CD8-positive, alpha-beta T cell (primary cell): ENCODE measurements at regions of chr10 and their contacts with region 1.

Region 1: DNA sequence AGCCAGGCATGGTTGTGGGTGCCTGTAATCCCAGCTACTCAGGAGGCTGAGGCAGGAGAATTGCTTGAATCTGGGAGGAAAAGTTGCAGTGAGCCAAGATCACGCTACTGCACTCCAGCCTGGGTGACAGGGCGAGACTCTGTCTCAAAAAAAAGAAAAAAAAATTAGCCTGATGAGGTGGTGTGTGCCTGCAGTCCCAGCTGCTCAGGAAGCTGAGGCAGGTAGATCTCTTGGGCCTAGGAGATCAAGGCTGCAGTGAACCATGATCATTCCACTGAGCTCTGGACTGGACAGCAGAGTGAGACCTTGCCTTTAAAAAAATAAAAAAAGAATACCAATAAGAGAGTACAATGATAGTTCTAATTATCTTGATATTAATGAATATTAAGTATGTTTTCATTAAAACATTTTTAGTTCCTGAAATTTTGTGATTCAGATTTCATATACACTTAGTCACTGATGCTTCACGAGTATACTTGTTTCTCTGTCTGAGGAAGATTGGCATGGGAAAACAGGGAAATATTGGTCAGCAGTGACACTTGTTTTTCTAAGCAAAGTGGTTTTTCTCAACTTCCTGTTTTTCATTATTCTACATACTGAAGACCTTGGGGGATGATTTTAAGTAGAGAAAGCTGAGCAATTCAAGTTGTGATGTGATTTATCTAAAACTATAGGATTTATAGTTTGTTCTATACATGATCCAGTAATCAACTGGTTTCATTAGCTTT is 76.8 kb downstream of the ADK start:
- DNase-seq: peak in 4 of 9 experiments; percentile 22 to 58 (median 43)
- ATAC-seq: peak; percentile 78
- H3K4me3 ChIP-seq: no peak overlapping the region
- H3K4me3 Mint-ChIP-seq: peak overlapping the region; percentile 55
- H3K27ac ChIP-seq: peak overlapping the region; percentile 38 to 69
- H3K27ac Mint-ChIP-seq: peak overlapping the region; percentile 94
- H3K4me1 ChIP-seq: peaks cover 17% of the 10 kb centered on the region
- H3K4me1 Mint-ChIP-seq: peaks cover 37% of the 10 kb centered on the region
- H3K27me3 ChIP-seq: no peaks in the 10 kb centered on the region
- H3K27me3 Mint-ChIP-seq: no peaks in the 10 kb centered on the region
- CTCF ChIP-seq: no peak

Region 2: GRCh38 chr10:74189999-74190421 is 37.9 kb before region 1 on chr10:
- CTCF ChIA-PET with region 1: no interaction called
- POLR2A ChIA-PET with region 1: no interaction called
- intact Hi-C with region 1: loop called in 1 of 2 experiments (anchors 5 kb)
- DNase-seq: peak in 5 of 9 experiments; percentile 24 to 65 (median 42)
- ATAC-seq: peak; percentile 48
- H3K4me3 ChIP-seq: peak overlapping the region in 1 of 2 experiments; percentile 4
- H3K4me3 Mint-ChIP-seq: peak overlapping the region; percentile 49
- H3K27ac ChIP-seq: peak overlapping the region; percentile 33 to 73
- H3K27ac Mint-ChIP-seq: peak overlapping the region; percentile 90
- H3K4me1 ChIP-seq: peaks cover 34% of the 10 kb centered on the region
- H3K4me1 Mint-ChIP-seq: peaks cover 67% of the 10 kb centered on the region
- H3K27me3 ChIP-seq: no peaks in the 10 kb centered on the region
- H3K27me3 Mint-ChIP-seq: no peaks in the 10 kb centered on the region
- CTCF ChIP-seq: no peak

Region 3: GRCh38 chr10:74243067-74243466 is 15.2 kb after region 1 on chr10:
- CTCF ChIA-PET with region 1: no interaction called
- POLR2A ChIA-PET with region 1: no interaction called
- intact Hi-C with region 1: no loop called
- DNase-seq: no peak
- ATAC-seq: no peak
- H3K4me3 ChIP-seq: no peak overlapping the region
- H3K4me3 Mint-ChIP-seq: no peak overlapping the region
- H3K27ac ChIP-seq: no peak overlapping the region
- H3K27ac Mint-ChIP-seq: no peak overlapping the region
- H3K4me1 ChIP-seq: no peaks in the 10 kb centered on the region
- H3K4me1 Mint-ChIP-seq: peaks cover 2% of the 10 kb centered on the region
- H3K27me3 ChIP-seq: no peaks in the 10 kb centered on the region
- H3K27me3 Mint-ChIP-seq: no peaks in the 10 kb centered on the region
- CTCF ChIP-seq: no peak